ENCODE measurements at regions of chr5 and their contacts with region 1.

Region 1: GRCh38 chr5:75236322-75237316 is at the start of gene ANKRD31:
- DNase-seq: peak; percentile 80 to 97 (median 90)
- ATAC-seq: peak; percentile 98
- H3K4me3 ChIP-seq: peak within 1 kb of the TSS; percentile 76
- H3K4me3 Mint-ChIP-seq: peak within 1 kb of the TSS; percentile 96
- H3K27ac ChIP-seq: peak within 1 kb of the TSS; percentile 58 to 79
- H3K27ac Mint-ChIP-seq: peak within 1 kb of the TSS; percentile 94
- H3K4me1 ChIP-seq: peaks cover 13% of the 10 kb centered on the region
- H3K4me1 Mint-ChIP-seq: peaks cover 19% of the 10 kb centered on the region
- H3K27me3 ChIP-seq: no peaks in the 10 kb centered on the region
- H3K27me3 Mint-ChIP-seq: no peaks in the 10 kb centered on the region
- CTCF ChIP-seq: peak; percentile 80
- total RNA-seq, gene ANKRD31: 0.55 to 0.56 TPM

Region 2: DNA sequence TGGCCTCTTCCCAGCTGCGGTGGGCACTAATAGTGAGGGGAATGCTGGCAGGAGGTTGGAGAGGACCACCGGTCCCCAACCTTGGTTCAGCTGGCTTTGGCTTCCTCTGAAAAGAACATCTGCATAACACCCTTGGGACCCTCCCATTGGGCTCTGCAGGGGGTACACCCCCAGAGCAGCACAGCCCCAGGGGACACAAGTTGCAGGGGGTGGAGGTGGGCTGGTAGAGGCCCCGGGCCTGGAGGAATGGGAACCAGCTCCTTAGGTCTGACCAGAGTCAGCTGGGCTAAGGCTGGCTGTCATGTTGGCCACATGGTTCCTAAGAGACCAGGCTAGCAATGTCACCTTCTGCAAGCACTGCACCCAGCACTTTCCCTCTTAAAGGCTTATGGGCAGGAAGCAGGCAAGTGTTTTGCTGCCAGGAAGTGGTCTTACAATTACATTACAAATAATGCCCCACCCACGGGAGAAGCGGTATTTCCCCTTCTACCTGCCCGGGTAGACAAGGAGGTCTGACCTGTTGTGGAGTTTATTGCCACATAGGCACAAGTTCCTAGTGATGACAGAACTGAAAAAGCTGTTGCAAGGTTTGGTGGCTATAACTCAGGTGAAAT is 202.4 kb before region 1 on chr5:
- CTCF ChIA-PET with region 1: no interaction called
- POLR2A ChIA-PET with region 1: interaction called, 19 read pairs
- intact Hi-C with region 1: no loop called
- DNase-seq: peak in 10 of 14 experiments; percentile 5 to 84 (median 46)
- ATAC-seq: peak; percentile 83
- H3K4me3 ChIP-seq: no peak overlapping the region
- H3K4me3 Mint-ChIP-seq: peak overlapping the region; percentile 46
- H3K27ac ChIP-seq: no peak overlapping the region
- H3K27ac Mint-ChIP-seq: peak overlapping the region; percentile 77
- H3K4me1 ChIP-seq: peaks cover 27% of the 10 kb centered on the region
- H3K4me1 Mint-ChIP-seq: peaks cover 86% of the 10 kb centered on the region
- H3K27me3 ChIP-seq: no peaks in the 10 kb centered on the region
- H3K27me3 Mint-ChIP-seq: no peaks in the 10 kb centered on the region
- CTCF ChIP-seq: no peak

Region 3: DNA sequence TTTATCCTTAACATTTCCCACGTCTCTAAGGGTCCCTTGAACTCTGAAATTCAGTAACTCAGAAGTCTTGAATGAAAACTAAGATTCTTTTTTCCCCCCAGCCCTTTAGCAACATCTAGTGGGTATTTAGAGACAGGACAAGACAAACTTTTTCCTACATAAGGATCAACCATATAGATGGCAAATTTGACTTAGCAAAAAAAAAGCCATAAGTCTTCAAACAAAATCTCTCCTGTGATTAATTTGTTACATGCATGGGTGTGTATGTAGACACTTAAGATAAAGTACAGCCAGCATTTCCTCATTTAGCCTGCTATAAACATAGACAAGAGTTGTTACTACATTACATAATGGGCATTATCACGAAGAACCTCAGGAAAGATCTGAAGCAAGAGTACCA is 29.1 kb after region 1 on chr5:
- CTCF ChIA-PET with region 1: interaction called, 6 read pairs
- POLR2A ChIA-PET with region 1: no interaction called
- intact Hi-C with region 1: loop called (anchors 1 to 2 kb)
- DNase-seq: peak in 3 of 14 experiments; percentile 57 to 68 (median 65)
- ATAC-seq: peak; percentile 74
- H3K4me3 ChIP-seq: no peak overlapping the region
- H3K4me3 Mint-ChIP-seq: no peak overlapping the region
- H3K27ac ChIP-seq: no peak overlapping the region
- H3K27ac Mint-ChIP-seq: no peak overlapping the region
- H3K4me1 ChIP-seq: no peaks in the 10 kb centered on the region
- H3K4me1 Mint-ChIP-seq: no peaks in the 10 kb centered on the region
- H3K27me3 ChIP-seq: no peaks in the 10 kb centered on the region
- H3K27me3 Mint-ChIP-seq: peaks cover 11% of the 10 kb centered on the region
- CTCF ChIP-seq: peak; percentile 78

Region 4: GRCh38 chr5:75681125-75681830 is 444.7 kb after region 1 on chr5:
- CTCF ChIA-PET with region 1: interaction called, 5 read pairs
- POLR2A ChIA-PET with region 1: interaction called, 5 read pairs
- intact Hi-C with region 1: loop called (anchors 2 to 5 kb)
- DNase-seq: peak in 3 of 14 experiments; percentile 58 to 61 (median 59)
- ATAC-seq: peak; percentile 38
- H3K4me3 ChIP-seq: no peak overlapping the region
- H3K4me3 Mint-ChIP-seq: no peak overlapping the region
- H3K27ac ChIP-seq: no peak overlapping the region
- H3K27ac Mint-ChIP-seq: no peak overlapping the region
- H3K4me1 ChIP-seq: no peaks in the 10 kb centered on the region
- H3K4me1 Mint-ChIP-seq: peaks cover 11% of the 10 kb centered on the region
- H3K27me3 ChIP-seq: no peaks in the 10 kb centered on the region
- H3K27me3 Mint-ChIP-seq: no peaks in the 10 kb centered on the region
- CTCF ChIP-seq: peak; percentile 82